Caco-2 (cell line): ENCODE measurements at regions of chr19 and their contacts with region 1.

Region 1: DNA sequence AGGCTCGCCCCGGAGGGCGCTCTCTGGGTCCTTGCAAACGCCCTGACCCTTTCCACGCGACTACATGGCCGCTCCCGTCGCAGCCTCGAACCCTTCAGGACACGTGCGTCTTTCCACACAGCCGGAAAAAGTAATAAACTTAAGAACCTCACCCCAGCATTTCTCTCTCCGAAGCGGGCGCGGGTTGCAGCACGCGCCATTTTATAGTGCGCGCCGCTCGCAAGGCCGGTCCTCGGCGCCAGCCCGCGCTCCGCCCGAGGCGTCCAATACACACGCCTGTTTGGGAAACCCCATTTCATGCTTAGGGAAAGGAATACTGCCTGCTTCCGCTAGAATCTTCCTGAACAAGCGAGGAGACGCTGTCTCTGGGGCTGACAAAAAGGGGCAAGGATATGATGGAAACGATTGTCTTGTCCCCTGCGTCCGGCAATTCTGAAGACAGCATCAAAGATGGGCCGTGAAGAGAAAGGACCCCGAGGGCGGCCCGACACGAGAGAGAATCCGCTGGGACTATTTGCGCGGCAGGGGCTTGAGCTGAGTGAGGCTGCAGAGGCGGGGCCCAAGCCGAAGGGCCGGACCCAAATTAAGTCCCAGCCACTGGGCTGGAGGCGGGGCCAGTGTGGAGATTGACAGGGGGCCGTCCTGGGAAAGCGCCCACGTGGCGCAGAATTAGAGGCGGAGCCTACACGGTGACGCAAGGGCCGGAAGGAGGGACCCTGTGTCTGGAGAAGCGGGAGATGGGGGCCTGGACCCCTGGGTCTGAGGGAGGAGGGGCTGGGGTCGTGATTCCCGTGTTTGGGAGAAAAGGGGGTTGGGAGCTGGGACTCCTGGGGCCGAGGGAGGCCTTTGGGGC is 14.4 kb downstream of the ACP4 start:
- DNase-seq: peak; percentile 99
- H3K4me3 ChIP-seq: peak overlapping the region; percentile 62
- H3K4me3 Mint-ChIP-seq: peak overlapping the region; percentile 93
- H3K27ac Mint-ChIP-seq: peak overlapping the region; percentile 99
- H3K4me1 ChIP-seq: peaks cover 10% of the 10 kb centered on the region; the same call in 1 of the 2 replicates
- H3K4me1 Mint-ChIP-seq: peaks cover 12% of the 10 kb centered on the region
- H3K27me3 ChIP-seq: no peaks in the 10 kb centered on the region
- H3K27me3 Mint-ChIP-seq: no peaks in the 10 kb centered on the region
- CTCF ChIP-seq: no peak

Region 2: GRCh38 chr19:50817941-50818858 is 13.6 kb after region 1 on chr19:
- CTCF ChIA-PET with region 1: no interaction called
- POLR2A ChIA-PET with region 1: no interaction called
- intact Hi-C with region 1: no loop called
- DNase-seq: peak; percentile 75 to 83
- H3K4me3 ChIP-seq: peak overlapping the region; percentile 16
- H3K4me3 Mint-ChIP-seq: peak overlapping the region; percentile 63
- H3K27ac Mint-ChIP-seq: no peak overlapping the region
- H3K4me1 ChIP-seq: peaks cover 5% of the 10 kb centered on the region
- H3K4me1 Mint-ChIP-seq: peaks cover 15% of the 10 kb centered on the region
- H3K27me3 ChIP-seq: peaks cover 2% of the 10 kb centered on the region; the same call in 1 of the 2 replicates
- H3K27me3 Mint-ChIP-seq: peaks cover 20% of the 10 kb centered on the region
- CTCF ChIP-seq: no peak

Region 3: GRCh38 chr19:51108066-51108804 is 303.6 kb after region 1 on chr19 and contains the start of gene CTU1:
- CTCF ChIA-PET with region 1: no interaction called
- POLR2A ChIA-PET with region 1: no interaction called
- intact Hi-C with region 1: loop called (anchors 1 kb)
- DNase-seq: peak; percentile 99
- H3K4me3 ChIP-seq: peak within 1 kb of the TSS; percentile 88
- H3K4me3 Mint-ChIP-seq: peak within 1 kb of the TSS; percentile 96
- H3K27ac Mint-ChIP-seq: peak within 1 kb of the TSS; percentile 98
- H3K4me1 ChIP-seq: no peaks in the 10 kb centered on the region
- H3K4me1 Mint-ChIP-seq: peaks cover 9% of the 10 kb centered on the region
- H3K27me3 ChIP-seq: no peaks in the 10 kb centered on the region
- H3K27me3 Mint-ChIP-seq: no peaks in the 10 kb centered on the region
- CTCF ChIP-seq: no peak
- total RNA-seq, gene CTU1: 8.1 and 8.9 TPM in 2 replicates